ENCODE measurements at regions of chr9 and their contacts with region 1.

Region 1: DNA sequence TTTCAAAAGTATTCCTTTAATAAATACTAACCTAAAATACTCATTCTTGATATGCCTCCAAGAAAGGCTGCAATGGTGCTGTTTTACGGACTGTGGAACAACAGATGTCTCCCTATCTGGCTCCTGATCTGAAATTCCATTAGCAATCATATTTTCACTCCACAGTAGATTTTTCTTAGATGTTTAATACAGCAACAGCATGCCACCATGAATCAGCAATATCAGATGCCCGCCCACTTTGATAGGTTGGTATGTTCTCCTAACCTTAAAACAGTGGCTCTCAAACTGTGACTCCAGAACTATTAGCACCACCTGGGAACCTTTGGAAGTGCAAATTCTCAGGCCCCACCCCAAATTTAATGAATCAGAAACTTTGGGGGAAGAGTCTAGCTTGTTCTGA is 110.2 kb downstream of the MLLT3 start:
- DNase-seq: no peak
- ATAC-seq: no peak

Region 2: GRCh38 chr9:20462410-20462809 is 49.7 kb before region 1 on chr9:
- intact Hi-C with region 1: loop called (anchors 10 kb)
- DNase-seq: no peak
- ATAC-seq: no peak